Naive thymus-derived CD4-positive, alpha-beta T cell (primary cell): ENCODE measurements at regions of chr7 and their contacts with region 1.

Region 1: DNA sequence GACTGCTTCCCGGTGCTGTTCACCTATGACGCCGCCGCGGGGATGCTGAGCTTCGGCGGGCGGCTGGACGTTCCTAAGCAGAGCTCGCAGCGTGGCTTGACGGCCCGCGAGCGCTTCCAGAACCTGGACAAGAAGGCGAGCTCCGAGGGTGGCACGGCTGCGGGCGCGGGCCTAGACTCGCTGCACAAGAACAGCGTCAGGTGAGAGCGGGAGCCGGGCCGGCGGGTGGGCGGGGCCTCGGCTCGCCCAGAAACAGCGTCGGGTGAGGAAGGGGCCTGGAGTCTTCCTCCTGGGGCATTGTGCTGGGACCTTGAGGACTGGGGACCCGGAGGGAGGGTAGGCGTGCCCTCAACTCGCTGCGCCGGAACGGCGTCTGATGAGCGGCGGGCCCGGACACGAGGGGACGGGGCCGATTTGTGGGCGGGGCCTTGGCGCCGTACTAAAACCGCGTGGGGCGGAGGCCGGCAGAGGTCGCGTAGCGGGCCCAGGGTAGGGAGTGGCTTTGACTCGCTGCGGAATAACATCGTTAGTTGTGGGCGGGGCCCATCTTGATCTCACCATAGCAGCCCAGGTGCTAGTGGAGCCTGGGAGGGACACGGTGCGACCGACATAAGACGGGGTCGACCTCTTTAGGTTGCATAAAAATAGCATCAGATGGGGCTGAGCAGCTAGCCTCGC is 15.6 kb downstream of the PDAP1 start:
- DNase-seq: peak; percentile 72 to 87 (median 83)
- ATAC-seq: peak; percentile 98
- H3K4me3 ChIP-seq: peak overlapping the region; percentile 55
- H3K4me3 Mint-ChIP-seq: peak overlapping the region; percentile 74 to 91 (median 84)
- H3K27ac ChIP-seq: peak overlapping the region; percentile 85
- H3K27ac Mint-ChIP-seq: peak overlapping the region; percentile 85 to 97 (median 95)
- H3K4me1 ChIP-seq: peaks cover 4 to 9% of the 10 kb centered on the region in 2 donors
- H3K4me1 Mint-ChIP-seq: peaks cover 10 to 28% (median 17%) of the 10 kb centered on the region in 7 donors
- H3K27me3 ChIP-seq: no peaks in the 10 kb centered on the region
- H3K27me3 Mint-ChIP-seq: no peaks in the 10 kb centered on the region

Region 2: GRCh38 chr7:99374103-99375064 is 18.4 kb before region 1 on chr7 and contains the start of gene ARPC1B:
- CTCF ChIA-PET with region 1: no interaction called
- POLR2A ChIA-PET with region 1: interaction called, 42 read pairs
- intact Hi-C with region 1: loop called (anchors 1 to 2 kb)
- DNase-seq: peak; percentile 67 to 86 (median 76)
- ATAC-seq: peak; percentile 82
- H3K4me3 ChIP-seq: peak within 1 kb of the TSS; percentile 83
- H3K4me3 Mint-ChIP-seq: peak within 1 kb of the TSS; percentile 71 to 90 (median 82)
- H3K27ac ChIP-seq: peak within 1 kb of the TSS; percentile 95
- H3K27ac Mint-ChIP-seq: peak within 1 kb of the TSS; percentile 76 to 99 (median 94)
- H3K4me1 ChIP-seq: peaks cover 18 to 35% of the 10 kb centered on the region in 2 donors
- H3K4me1 Mint-ChIP-seq: peaks cover 6 to 36% (median 32%) of the 10 kb centered on the region in 7 donors
- H3K27me3 ChIP-seq: no peaks in the 10 kb centered on the region
- H3K27me3 Mint-ChIP-seq: no peaks in the 10 kb centered on the region
- total RNA-seq, gene ARPC1B: 88.1 to 364 (median 141) TPM

Region 3: DNA sequence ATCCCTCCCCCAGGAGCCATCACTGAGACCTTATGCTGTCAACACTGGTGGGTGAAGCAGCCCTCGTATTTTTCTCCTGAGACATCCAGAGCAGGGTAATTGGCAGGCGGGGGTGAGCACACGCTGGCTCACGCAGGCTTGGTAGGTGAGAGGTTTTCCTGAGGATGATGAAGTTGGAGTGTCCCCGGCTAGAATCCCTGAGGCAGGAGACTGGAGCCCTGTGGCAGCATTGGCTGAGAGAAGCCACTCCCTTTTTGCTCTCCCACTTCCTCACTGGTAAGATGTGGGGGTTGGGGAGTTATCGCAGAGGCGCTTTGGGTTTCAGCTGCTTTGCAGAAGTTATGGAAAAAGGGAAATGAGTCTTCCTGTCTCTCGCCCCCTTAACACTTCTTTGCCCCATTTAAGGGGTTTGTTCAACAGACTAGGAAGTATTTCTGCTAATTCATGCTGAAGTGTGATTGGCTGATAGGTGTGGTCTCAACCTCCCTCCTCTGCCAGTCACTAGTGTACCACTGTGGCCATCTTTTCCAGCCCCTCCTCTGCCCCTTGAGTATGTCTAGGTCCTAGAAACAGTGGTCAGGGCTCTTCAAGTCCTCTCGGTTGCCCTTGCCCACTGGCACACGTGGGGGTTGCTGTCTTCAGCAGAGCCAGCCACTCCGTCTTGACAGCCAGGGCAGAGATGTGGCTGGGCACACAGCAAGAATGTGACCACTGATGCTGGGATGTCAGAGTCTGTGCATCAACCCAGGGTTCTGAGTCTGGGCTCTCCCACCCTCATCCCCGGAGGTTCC is 12.6 kb before region 1 on chr7:
- CTCF ChIA-PET with region 1: no interaction called
- POLR2A ChIA-PET with region 1: interaction called, 42 read pairs
- intact Hi-C with region 1: loop called (anchors 1 kb)
- DNase-seq: peak in 7 of 9 donors; percentile 21 to 37 (median 30)
- ATAC-seq: peak; percentile 15
- H3K4me3 ChIP-seq: peak overlapping the region; percentile 78
- H3K4me3 Mint-ChIP-seq: peak overlapping the region; percentile 78 to 91 (median 84)
- H3K27ac ChIP-seq: peak overlapping the region; percentile 96
- H3K27ac Mint-ChIP-seq: peak overlapping the region; percentile 87 to 99 (median 98)
- H3K4me1 ChIP-seq: peaks cover 44 to 68% of the 10 kb centered on the region in 2 donors
- H3K4me1 Mint-ChIP-seq: peaks cover 29 to 70% (median 60%) of the 10 kb centered on the region in 7 donors
- H3K27me3 ChIP-seq: no peaks in the 10 kb centered on the region
- H3K27me3 Mint-ChIP-seq: no peaks in the 10 kb centered on the region